ENCODE measurements at regions of chr15 and their contacts with region 1.

Region 1: DNA sequence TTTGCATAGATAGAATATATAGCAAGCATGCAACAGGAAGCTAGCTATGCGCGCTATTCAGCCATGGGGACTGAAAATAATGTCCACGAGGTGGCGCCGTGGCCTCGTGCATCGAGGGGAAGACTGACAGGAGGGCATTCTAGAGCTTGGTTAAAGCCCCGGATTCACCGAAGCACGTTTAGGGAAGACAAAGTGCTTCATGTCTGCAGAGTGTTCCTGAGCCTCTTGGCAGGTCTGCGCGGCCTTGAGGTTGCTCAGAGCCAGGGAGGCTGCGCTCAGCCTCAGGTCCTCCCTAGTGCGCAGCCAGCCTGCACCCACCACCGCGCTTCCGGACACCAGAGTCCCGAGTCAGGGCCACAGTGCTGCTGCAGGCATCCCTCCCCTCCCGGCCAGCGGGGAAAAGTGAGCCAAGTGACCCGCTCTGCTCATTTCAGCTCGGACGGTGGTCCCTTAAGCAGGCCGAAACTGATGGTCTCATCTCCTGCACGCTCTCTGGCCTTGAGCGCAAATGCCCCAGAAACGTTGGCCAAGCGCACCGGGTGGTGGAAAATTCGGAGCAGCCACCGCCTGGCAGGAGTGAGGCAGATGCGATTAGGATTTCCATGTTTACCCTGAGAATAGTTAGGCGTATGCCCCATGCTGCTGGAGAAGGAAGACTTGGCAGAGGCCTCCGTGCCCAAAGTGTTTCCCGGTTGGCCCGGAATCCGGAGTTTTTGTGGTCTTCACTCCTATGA is 24.8 kb downstream of the GABRA5 start:
- DNase-seq: peak in 4 of 5 donors; percentile 28 to 54 (median 47)
- ATAC-seq: peak; percentile 36 to 84 (median 69)
- H3K4me3 ChIP-seq: peak overlapping the region in 10 of 12 donors; percentile 6 to 44 (median 28)
- H3K27ac ChIP-seq: no peak overlapping the region
- H3K4me1 ChIP-seq: peaks cover 0 to 11% (median 5%) of the 10 kb centered on the region in 12 donors
- H3K27me3 ChIP-seq: peaks cover 0 to 42% (median 14%) of the 10 kb centered on the region in 9 donors
- CTCF ChIP-seq: peak; percentile 46 to 74 (median 59)
- POLR2A ChIP-seq: no peak

Region 2: GRCh38 chr15:26729581-26729980 is 162.0 kb before region 1 on chr15:
- intact Hi-C with region 1: no loop called
- DNase-seq: no peak
- ATAC-seq: no peak
- H3K4me3 ChIP-seq: no peak overlapping the region
- H3K27ac ChIP-seq: no peak overlapping the region
- H3K4me1 ChIP-seq: no peaks in the 10 kb centered on the region
- H3K27me3 ChIP-seq: no peaks in the 10 kb centered on the region
- CTCF ChIP-seq: no peak
- POLR2A ChIP-seq: no peak

Region 3: DNA sequence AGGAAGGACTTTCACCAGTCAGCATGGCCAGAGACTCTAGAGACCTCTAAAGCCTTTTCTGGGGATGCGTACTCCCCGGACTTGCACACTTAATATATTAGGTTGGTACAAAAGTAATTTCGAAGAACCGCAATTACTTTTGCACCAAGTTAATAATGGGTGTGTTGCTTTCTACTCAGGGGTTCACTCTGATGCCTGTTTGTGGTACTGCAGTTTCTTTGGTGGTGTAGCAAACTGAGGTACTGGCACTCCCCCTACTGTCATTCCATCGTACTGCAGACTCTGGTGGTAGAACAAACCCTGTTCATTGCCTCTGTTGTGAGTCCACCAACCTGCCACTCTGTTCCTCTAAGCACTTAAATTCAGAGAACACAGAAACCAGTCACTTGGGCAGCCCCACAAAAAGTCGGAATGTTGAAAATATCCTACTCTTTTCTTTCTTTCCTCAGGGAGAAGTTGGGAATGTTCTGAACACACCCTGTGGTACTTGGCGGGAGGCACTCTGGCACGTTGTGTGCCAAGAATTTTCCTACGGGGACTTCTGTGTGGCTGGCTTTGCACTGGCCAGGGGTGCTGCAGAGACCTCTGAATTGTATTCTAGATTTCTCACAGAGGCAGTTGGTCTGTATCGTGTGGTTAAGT is 125.7 kb after region 1 on chr15:
- intact Hi-C with region 1: loop called in 5 of 10 experiments (anchors 5 to 10 kb)
- DNase-seq: no peak
- ATAC-seq: peak in 1 of 4 donors; percentile 71
- H3K4me3 ChIP-seq: no peak overlapping the region
- H3K27ac ChIP-seq: no peak overlapping the region
- H3K4me1 ChIP-seq: no peaks in the 10 kb centered on the region
- H3K27me3 ChIP-seq: peaks cover 0 to 3% (median 0%) of the 10 kb centered on the region in 9 donors
- CTCF ChIP-seq: peak in 10 of 12 donors; percentile 12 to 80 (median 48)
- POLR2A ChIP-seq: no peak

Region 4: GRCh38 chr15:27028858-27029477 is 137.4 kb after region 1 on chr15:
- intact Hi-C with region 1: loop called in 1 of 10 experiments (anchors 10 kb)
- DNase-seq: no peak
- ATAC-seq: no peak
- H3K4me3 ChIP-seq: no peak overlapping the region
- H3K27ac ChIP-seq: no peak overlapping the region
- H3K4me1 ChIP-seq: no peaks in the 10 kb centered on the region
- H3K27me3 ChIP-seq: peaks cover 0 to 6% (median 0%) of the 10 kb centered on the region in 9 donors
- CTCF ChIP-seq: no peak
- POLR2A ChIP-seq: no peak

Region 5: DNA sequence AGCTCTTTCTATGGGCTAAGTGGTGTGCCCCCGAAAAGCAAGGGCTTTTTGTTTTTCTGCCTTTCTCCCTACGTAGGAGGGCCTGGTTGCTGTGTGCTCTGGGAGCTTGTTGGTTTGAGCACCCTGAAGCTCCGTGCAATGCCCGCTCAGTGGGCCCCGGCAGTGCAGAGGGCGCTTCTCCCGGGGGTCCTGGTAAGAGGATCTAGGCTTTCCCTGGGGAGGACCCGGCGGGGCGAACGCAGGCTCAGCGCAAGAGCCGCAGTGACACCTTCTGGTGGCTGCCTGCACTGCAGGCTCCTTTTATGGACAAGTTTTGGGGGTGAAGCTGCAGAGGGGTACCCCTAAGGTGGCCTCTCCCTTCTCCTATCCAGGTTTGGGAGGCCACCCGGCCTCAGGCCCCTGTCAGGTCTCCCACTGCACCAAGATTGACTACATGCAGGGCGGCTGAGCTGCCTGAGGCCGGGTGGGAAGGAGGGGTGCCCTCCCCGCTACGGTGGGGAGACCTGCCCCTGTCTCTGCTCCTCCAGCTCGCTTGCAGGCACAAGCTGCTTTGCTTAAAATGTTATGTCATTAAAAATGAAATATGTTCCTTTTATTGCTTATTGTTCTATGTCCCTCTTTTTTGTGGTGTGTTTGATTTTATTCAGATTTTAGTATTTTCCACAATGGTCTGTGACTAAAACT is 467.3 kb after region 1 on chr15:
- intact Hi-C with region 1: loop called in 8 of 10 experiments (anchors 2 to 10 kb)
- DNase-seq: peak in 2 of 5 donors; percentile 28 to 52
- ATAC-seq: no peak
- H3K4me3 ChIP-seq: no peak overlapping the region
- H3K27ac ChIP-seq: no peak overlapping the region
- H3K4me1 ChIP-seq: no peaks in the 10 kb centered on the region
- H3K27me3 ChIP-seq: peaks cover 0 to 29% (median 0%) of the 10 kb centered on the region in 9 donors
- CTCF ChIP-seq: peak; percentile 36 to 74 (median 57)
- POLR2A ChIP-seq: no peak

Region 6: DNA sequence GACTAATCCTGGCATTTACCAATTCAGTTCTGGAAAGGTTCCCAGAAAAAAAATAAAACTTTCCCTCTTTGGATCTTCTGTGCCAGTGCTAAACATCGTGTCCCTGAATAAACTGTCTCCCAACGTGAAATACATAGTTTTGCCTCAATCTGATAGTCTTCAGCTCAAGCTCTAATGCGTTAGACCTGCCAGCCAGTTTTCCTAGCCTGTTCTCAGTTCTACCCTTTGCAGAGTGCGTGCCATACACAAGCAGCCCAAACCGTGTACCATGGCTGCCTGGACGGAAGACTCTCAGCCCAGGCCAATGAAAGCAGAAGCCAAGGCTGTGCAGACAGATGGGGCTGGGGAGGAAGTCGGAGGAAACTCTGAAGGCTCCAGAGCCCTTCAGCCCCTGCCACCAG is 1218.9 kb after region 1 on chr15:
- intact Hi-C with region 1: loop called in 1 of 10 experiments (anchors 10 kb)
- DNase-seq: peak in 1 of 5 donors; percentile 8
- ATAC-seq: no peak
- H3K4me3 ChIP-seq: no peak overlapping the region
- H3K27ac ChIP-seq: no peak overlapping the region
- H3K4me1 ChIP-seq: peaks cover 0 to 18% (median 12%) of the 10 kb centered on the region in 12 donors
- H3K27me3 ChIP-seq: peaks cover 0 to 19% (median 5%) of the 10 kb centered on the region in 9 donors
- CTCF ChIP-seq: no peak
- POLR2A ChIP-seq: no peak

Region 7: DNA sequence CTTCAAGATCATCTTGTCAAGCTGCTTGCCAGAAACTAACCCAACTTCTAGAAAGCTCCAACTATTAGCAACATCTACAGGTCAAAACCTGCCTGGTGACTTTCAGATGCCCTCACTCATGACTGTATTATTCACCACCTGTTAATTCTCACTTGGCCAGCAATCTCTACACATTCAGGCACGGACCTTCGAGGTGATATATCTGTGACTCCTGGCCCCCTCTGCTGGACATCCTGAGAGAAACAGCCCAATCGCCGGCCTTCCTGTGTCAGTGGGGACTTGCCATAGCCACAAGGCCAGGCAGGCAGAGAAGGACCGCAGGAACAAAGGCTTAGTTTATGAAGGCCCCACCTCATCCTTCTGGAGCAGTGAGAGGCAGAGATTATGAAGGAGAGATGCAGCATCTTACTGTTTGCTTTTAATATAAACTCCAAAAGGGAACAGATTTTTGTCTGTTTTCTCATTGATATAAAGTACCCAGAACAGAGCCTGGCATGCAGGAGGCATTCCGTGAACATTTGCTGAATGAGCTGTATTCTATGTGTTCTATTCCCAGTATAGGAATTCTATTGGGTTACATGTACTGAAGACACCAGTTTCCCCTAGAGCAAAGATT is 1231.9 kb after region 1 on chr15:
- intact Hi-C with region 1: loop called in 6 of 10 experiments (anchors 5 to 10 kb)
- DNase-seq: peak; percentile 46 to 72 (median 60)
- ATAC-seq: peak in 3 of 4 donors; percentile 38 to 67 (median 56)
- H3K4me3 ChIP-seq: no peak overlapping the region
- H3K27ac ChIP-seq: no peak overlapping the region
- H3K4me1 ChIP-seq: peaks cover 0 to 10% (median 0%) of the 10 kb centered on the region in 12 donors
- H3K27me3 ChIP-seq: no peaks in the 10 kb centered on the region
- CTCF ChIP-seq: peak; percentile 35 to 72 (median 64)
- POLR2A ChIP-seq: no peak

Measured in heart left ventricle (tissue), 16 donors.